ENCODE measurements at regions of chr4 and their contacts with region 1.

Region 1: GRCh38 chr4:37802068-37802666 is 24.3 kb upstream of the PGM2 start:
- DNase-seq: peak; percentile 70
- H3K4me3 Mint-ChIP-seq: no peak overlapping the region
- H3K27ac Mint-ChIP-seq: no peak overlapping the region
- H3K4me1 Mint-ChIP-seq: peaks cover 6% of the 10 kb centered on the region
- H3K27me3 Mint-ChIP-seq: no peaks in the 10 kb centered on the region
- CTCF ChIP-seq: peak; percentile 29

Region 2: DNA sequence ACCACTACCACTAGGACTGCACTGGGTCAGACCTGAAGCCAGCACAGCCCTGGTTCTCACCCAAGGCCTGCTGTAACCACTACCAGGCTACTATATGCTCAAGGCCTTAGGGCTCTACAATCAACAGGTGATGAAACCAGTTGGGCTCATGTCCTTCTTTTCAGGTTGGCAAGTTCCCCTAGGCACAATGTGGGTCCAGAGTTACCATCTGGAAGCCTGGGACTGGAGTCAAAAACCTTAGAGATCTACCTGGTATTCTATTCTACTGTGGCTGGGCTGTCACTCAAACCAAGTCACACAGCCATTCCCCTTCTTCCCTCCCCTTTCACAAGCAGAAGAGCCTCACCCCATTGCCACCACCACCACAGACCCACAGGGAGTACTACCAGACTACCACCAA is 291.5 kb before region 1 on chr4:
- CTCF ChIA-PET with region 1: no interaction called
- intact Hi-C with region 1: no loop called
- DNase-seq: no peak
- H3K4me3 Mint-ChIP-seq: no peak overlapping the region
- H3K27ac Mint-ChIP-seq: no peak overlapping the region
- H3K4me1 Mint-ChIP-seq: peaks cover 16% of the 10 kb centered on the region
- H3K27me3 Mint-ChIP-seq: no peaks in the 10 kb centered on the region
- CTCF ChIP-seq: no peak

Region 3: GRCh38 chr4:37603070-37603468 is 199.1 kb before region 1 on chr4:
- CTCF ChIA-PET with region 1: interaction called, 16 read pairs
- intact Hi-C with region 1: loop called (anchors 2 kb)
- DNase-seq: peak; percentile 82
- H3K4me3 Mint-ChIP-seq: no peak overlapping the region
- H3K27ac Mint-ChIP-seq: peak overlapping the region; percentile 40
- H3K4me1 Mint-ChIP-seq: peaks cover 54% of the 10 kb centered on the region
- H3K27me3 Mint-ChIP-seq: no peaks in the 10 kb centered on the region
- CTCF ChIP-seq: peak; percentile 91

Region 4: DNA sequence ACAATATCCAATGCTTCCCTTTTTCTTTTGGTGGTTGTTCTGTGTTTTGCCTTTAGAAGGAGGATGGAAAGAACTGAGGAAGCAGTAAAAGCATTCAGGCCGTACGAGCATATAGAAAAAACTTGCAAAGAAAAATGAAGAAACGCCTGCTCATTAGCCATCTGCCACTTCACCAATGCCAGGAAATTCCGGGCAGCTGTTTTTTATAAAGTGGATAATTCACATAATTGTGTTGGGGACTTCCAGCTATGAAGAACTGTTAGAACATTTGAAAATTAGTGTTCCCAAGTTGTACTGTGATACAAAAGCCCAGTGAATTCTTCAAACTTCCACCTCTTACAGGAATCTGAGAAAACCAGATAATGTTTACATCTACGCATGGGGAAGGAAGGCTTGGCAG is 127.7 kb before region 1 on chr4:
- CTCF ChIA-PET with region 1: no interaction called
- intact Hi-C with region 1: loop called (anchors 5 kb)
- DNase-seq: no peak
- H3K4me3 Mint-ChIP-seq: peak overlapping the region; percentile 12
- H3K27ac Mint-ChIP-seq: no peak overlapping the region
- H3K4me1 Mint-ChIP-seq: peaks cover 38% of the 10 kb centered on the region
- H3K27me3 Mint-ChIP-seq: no peaks in the 10 kb centered on the region
- CTCF ChIP-seq: no peak

Region 5: DNA sequence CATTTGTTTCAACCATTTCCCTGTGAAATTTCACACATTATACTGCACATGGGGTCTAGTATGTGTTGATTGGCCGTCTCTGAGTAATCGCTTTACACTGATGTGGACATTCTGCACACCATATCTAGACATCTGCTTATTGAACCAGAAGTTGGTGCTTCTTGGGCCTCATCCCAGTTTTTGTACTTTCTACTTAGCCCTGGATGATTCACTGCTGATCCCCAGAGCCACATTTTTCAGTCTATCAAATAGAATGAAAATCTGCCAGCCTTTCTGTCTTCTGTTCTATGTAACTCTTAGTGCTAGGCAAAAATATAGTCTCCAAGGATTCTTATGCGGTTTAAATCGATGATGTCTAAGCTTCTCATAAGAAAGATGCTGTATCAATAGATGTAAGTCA is 75.5 kb before region 1 on chr4:
- CTCF ChIA-PET with region 1: no interaction called
- intact Hi-C with region 1: loop called (anchors 5 kb)
- DNase-seq: no peak
- H3K4me3 Mint-ChIP-seq: no peak overlapping the region
- H3K27ac Mint-ChIP-seq: no peak overlapping the region
- H3K4me1 Mint-ChIP-seq: peaks cover 31% of the 10 kb centered on the region
- H3K27me3 Mint-ChIP-seq: no peaks in the 10 kb centered on the region
- CTCF ChIP-seq: no peak

Region 6: GRCh38 chr4:37749398-37749988 is 52.7 kb before region 1 on chr4:
- CTCF ChIA-PET with region 1: no interaction called
- intact Hi-C with region 1: no loop called
- DNase-seq: no peak
- H3K4me3 Mint-ChIP-seq: no peak overlapping the region
- H3K27ac Mint-ChIP-seq: no peak overlapping the region
- H3K4me1 Mint-ChIP-seq: no peaks in the 10 kb centered on the region
- H3K27me3 Mint-ChIP-seq: no peaks in the 10 kb centered on the region
- CTCF ChIP-seq: no peak

Region 7: GRCh38 chr4:37812710-37813109 is 10.5 kb after region 1 on chr4:
- CTCF ChIA-PET with region 1: no interaction called
- intact Hi-C with region 1: no loop called
- DNase-seq: no peak
- H3K4me3 Mint-ChIP-seq: no peak overlapping the region
- H3K27ac Mint-ChIP-seq: no peak overlapping the region
- H3K4me1 Mint-ChIP-seq: no peaks in the 10 kb centered on the region
- H3K27me3 Mint-ChIP-seq: no peaks in the 10 kb centered on the region
- CTCF ChIP-seq: no peak

Region 8: DNA sequence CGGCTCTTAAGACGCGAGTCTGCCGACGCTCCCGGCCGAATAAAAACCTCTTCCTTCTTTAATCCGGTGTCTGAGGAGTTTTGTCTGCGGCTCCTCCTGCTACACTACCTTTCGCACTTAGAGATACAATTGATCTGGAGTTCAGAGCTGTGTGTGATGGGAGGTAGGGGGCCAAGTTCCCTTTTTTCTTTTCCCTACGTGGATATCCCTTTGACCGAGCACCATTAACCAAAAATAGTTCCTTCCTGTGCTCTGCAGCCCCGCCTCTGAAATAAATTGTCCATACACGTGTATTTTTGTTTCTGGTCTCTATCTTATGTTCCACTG is 23.8 kb after region 1 on chr4:
- CTCF ChIA-PET with region 1: interaction called, 6 read pairs
- intact Hi-C with region 1: loop called (anchors 1 kb)
- DNase-seq: no peak
- H3K4me3 Mint-ChIP-seq: peak overlapping the region; percentile 92
- H3K27ac Mint-ChIP-seq: peak overlapping the region; percentile 91
- H3K4me1 Mint-ChIP-seq: peaks cover 17% of the 10 kb centered on the region
- H3K27me3 Mint-ChIP-seq: no peaks in the 10 kb centered on the region
- CTCF ChIP-seq: no peak

Region 9: DNA sequence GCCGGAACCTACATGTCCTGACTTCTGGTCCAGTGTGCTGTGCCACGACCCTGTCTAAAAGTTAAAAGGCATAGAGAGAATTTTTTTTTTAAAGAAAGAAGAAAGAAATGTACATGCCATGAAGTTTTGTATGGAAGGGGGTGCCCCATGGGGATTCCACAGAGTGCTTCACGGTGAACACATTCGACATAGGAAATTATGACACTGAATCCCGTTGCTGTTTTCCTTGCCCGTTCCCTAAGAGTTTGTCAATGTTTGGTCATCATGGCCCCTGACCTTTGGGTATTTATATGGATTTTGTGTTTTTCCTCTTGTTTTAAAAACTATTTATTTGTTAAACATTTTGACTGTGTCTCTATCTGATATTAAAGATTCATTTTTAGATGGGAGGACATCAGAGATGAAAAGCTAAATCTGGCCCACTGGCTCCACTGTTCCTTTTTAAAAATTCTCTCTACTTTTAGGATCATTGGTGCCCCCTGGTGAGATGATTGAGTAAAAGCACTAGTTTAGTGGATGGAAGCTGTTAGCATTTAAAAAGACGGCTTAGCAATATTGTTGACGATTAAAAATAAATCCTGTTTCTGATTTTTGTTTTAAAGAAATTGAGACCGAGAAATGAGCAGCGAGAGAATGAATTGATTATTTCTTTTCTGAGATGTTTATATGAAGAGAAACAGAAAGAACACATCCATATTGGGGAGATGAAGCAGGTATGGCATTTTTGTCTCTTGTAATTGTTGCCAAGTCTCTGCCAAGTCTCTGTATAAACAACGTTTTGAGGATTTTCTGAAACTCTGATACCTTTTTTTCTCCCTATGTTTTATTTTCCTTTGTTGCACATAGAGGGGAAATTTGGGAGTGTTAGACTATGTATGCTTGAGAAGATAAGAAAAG is 233.1 kb after region 1 on chr4:
- CTCF ChIA-PET with region 1: interaction called, 8 read pairs
- intact Hi-C with region 1: loop called (anchors 2 kb)
- DNase-seq: peak; percentile 55
- H3K4me3 Mint-ChIP-seq: no peak overlapping the region
- H3K27ac Mint-ChIP-seq: no peak overlapping the region
- H3K4me1 Mint-ChIP-seq: no peaks in the 10 kb centered on the region
- H3K27me3 Mint-ChIP-seq: no peaks in the 10 kb centered on the region
- CTCF ChIP-seq: peak; percentile 24

Measured in Calu3 (cell line).